ENCODE measurements at regions of chr1 and their contacts with region 1.

Region 1: DNA sequence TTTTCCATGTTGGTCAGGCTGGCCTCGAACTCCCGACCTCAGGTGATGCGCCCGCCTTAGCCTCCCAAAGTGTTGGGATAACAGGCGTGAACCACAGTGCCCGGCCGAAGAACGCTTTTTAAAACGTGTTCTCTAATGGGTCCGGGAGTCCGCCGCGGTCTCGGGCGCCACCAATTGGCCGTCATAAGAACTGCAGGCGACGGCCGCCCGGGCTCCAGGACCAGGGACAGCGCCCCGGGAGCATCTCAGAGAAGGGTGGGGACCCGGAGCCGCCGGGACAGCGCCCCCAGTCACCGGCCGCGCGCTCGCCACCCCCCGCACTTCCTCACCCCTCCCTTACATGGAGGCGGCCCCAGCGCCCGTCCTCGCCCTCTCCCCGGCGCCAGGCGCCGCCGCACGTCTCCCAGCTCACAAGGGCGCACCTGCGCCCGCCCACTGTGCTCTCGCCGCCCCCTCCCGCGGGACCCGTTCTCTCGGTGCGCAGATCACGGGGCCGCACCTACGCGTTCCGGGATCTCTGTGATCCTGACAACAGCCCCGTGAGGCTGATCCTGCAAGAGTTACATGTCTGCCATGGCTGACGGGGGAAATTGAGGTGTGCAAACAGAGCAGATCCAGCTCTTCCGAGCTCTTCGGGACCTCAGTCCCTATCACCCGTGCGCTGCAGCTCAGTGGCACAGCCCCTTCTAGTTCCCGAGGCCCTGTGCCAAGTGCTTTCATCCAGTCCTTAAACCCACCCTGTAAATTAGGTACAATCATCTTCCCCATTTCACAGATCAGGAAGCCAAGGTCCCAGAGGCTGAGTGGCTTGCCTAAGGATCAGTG is 9.8 kb downstream of the RAP1GAP start:
- DNase-seq: peak; percentile 86
- ATAC-seq: peak; percentile 74
- H3K4me3 Mint-ChIP-seq: peak overlapping the region; percentile 77
- H3K27ac Mint-ChIP-seq: no peak overlapping the region
- H3K4me1 Mint-ChIP-seq: peaks cover 13% of the 10 kb centered on the region
- H3K27me3 Mint-ChIP-seq: peaks cover 27% of the 10 kb centered on the region
- CTCF ChIP-seq: peak; percentile 90

Region 2: GRCh38 chr1:21645550-21645949 is 13.8 kb before region 1 on chr1:
- CTCF ChIA-PET with region 1: interaction called, 11 read pairs
- POLR2A ChIA-PET with region 1: no interaction called
- DNase-seq: no peak
- ATAC-seq: no peak
- H3K4me3 Mint-ChIP-seq: no peak overlapping the region
- H3K27ac Mint-ChIP-seq: no peak overlapping the region
- H3K4me1 Mint-ChIP-seq: peaks cover 6% of the 10 kb centered on the region; the same call in 1 of the 2 replicates
- H3K27me3 Mint-ChIP-seq: peaks cover 3% of the 10 kb centered on the region; the same call in 1 of the 2 replicates
- CTCF ChIP-seq: no peak

Region 3: GRCh38 chr1:21669258-21670058 is 10.1 kb after region 1 on chr1 and contains the start of gene RAP1GAP:
- CTCF ChIA-PET with region 1: interaction called, 11 read pairs
- POLR2A ChIA-PET with region 1: interaction called, 4 read pairs
- DNase-seq: peak; percentile 57
- ATAC-seq: peak; percentile 58
- H3K4me3 Mint-ChIP-seq: peak within 1 kb of the TSS; percentile 67
- H3K27ac Mint-ChIP-seq: no peak within 1 kb of the TSS
- H3K4me1 Mint-ChIP-seq: peaks cover 24% of the 10 kb centered on the region
- H3K27me3 Mint-ChIP-seq: peaks cover 20% of the 10 kb centered on the region
- CTCF ChIP-seq: no peak
- total RNA-seq, gene RAP1GAP: 7.6 to 9.9 TPM (median 9.7 TPM) in 3 replicates

Measured in WTC11 (cell line).